MCF 10A (cell line): ENCODE measurements at regions of chr17 and their contacts with region 1.

Region 1: GRCh38 chr17:81601525-81602120 is 35.3 kb downstream of the NPLOC4 start:
- DNase-seq: peak; percentile 72
- H3K4me3 Mint-ChIP-seq: no peak overlapping the region
- H3K27ac Mint-ChIP-seq: no peak overlapping the region
- H3K4me1 Mint-ChIP-seq: no peaks in the 10 kb centered on the region
- H3K27me3 Mint-ChIP-seq: no peaks in the 10 kb centered on the region
- CTCF ChIP-seq: peak; percentile 80

Region 2: GRCh38 chr17:81478119-81478518 is 123.5 kb before region 1 on chr17:
- CTCF ChIA-PET with region 1: no interaction called
- POLR2A ChIA-PET with region 1: no interaction called
- intact Hi-C with region 1: no loop called
- DNase-seq: no peak
- H3K4me3 Mint-ChIP-seq: no peak overlapping the region
- H3K27ac Mint-ChIP-seq: no peak overlapping the region
- H3K4me1 Mint-ChIP-seq: peaks cover 4% of the 10 kb centered on the region
- H3K27me3 Mint-ChIP-seq: no peaks in the 10 kb centered on the region
- CTCF ChIP-seq: no peak

Region 3: GRCh38 chr17:81512560-81513371 is 88.9 kb before region 1 on chr17 and contains the start of gene ACTG1:
- CTCF ChIA-PET with region 1: interaction called, 12 read pairs
- POLR2A ChIA-PET with region 1: no interaction called
- intact Hi-C with region 1: loop called (anchors 2 kb)
- DNase-seq: peak; percentile 92
- H3K4me3 Mint-ChIP-seq: peak within 1 kb of the TSS; percentile 92
- H3K27ac Mint-ChIP-seq: peak within 1 kb of the TSS; percentile 91
- H3K4me1 Mint-ChIP-seq: peaks cover 25% of the 10 kb centered on the region
- H3K27me3 Mint-ChIP-seq: no peaks in the 10 kb centered on the region
- CTCF ChIP-seq: no peak
- total RNA-seq, gene ACTG1: 1,056 and 1,461 TPM in 2 replicates

Region 4: GRCh38 chr17:81519284-81519955 is 82.2 kb before region 1 on chr17:
- CTCF ChIA-PET with region 1: interaction called, 12 read pairs
- POLR2A ChIA-PET with region 1: interaction called, 4 read pairs
- intact Hi-C with region 1: no loop called
- DNase-seq: peak; percentile 50
- H3K4me3 Mint-ChIP-seq: peak overlapping the region; percentile 49
- H3K27ac Mint-ChIP-seq: peak overlapping the region; percentile 42
- H3K4me1 Mint-ChIP-seq: no peaks in the 10 kb centered on the region
- H3K27me3 Mint-ChIP-seq: no peaks in the 10 kb centered on the region
- CTCF ChIP-seq: peak; percentile 53

Region 5: DNA sequence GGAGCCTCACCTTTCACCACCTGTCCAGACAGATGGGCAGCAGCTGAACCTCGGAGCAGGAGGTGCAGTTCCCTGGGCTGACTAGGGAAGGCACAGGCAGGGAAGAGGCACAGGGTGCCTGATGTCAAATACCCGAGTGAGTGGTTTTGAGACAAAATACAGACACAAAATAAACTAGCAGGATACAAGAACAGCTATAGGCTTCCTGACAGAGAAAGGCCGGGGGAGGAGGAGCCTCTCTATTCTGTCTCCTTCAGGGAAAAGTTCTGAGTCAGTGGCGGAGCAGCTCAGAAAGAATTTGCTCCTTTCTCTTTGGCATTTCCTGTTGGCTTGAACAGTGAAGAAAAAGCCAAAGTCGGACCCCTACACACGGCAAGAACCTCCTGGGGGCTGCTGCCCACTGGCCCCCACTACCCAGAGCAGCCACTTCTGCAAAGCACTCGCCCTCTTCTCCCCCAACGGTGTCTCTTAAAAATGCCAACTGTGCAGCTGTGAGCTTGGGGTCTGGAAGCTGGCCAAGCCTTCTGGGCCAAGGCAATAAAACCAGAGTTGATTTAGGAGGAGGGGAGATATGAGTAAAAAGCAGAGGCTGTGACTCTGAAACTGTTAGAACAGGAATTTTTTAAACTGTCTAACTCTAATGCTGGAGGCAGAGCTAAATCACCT is 35.0 kb before region 1 on chr17:
- CTCF ChIA-PET with region 1: interaction called, 21 read pairs
- POLR2A ChIA-PET with region 1: interaction called, 10 read pairs
- intact Hi-C with region 1: no loop called
- DNase-seq: peak; percentile 88
- H3K4me3 Mint-ChIP-seq: peak overlapping the region; percentile 63
- H3K27ac Mint-ChIP-seq: peak overlapping the region; percentile 71
- H3K4me1 Mint-ChIP-seq: peaks cover 14% of the 10 kb centered on the region
- H3K27me3 Mint-ChIP-seq: no peaks in the 10 kb centered on the region
- CTCF ChIP-seq: no peak

Region 6: DNA sequence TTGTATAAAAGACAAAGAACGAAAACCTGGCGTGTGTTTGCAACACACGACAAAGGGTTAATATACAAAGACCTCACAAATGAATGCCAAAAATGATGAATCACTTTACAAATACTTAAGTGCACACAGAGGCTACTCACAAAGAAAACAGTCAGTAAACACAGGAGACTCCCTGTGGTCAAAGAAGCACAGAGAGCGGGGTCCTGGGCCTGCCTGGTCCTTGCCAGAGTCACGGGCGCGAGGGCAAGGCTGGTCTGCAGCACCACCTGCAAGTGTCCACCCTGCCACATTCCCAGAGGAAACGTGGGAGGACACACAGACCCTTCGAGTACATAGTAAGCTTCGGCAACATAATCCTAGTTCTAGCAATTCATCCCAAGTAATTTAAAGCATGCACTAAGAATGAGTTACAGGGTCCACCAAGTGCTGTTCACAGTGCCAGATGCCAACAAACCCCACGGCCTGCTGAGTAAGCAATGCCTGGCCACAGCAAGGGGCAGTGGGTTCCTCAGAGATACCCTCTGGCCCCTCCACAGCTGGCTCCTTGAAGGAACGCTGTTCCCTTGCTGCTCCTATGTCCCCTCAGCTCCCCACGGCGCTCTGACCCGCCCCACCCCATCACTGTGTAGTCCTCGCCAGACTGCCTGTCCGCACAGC is 24.9 kb before region 1 on chr17:
- CTCF ChIA-PET with region 1: interaction called, 29 read pairs
- POLR2A ChIA-PET with region 1: interaction called, 7 read pairs
- intact Hi-C with region 1: no loop called
- DNase-seq: peak; percentile 79
- H3K4me3 Mint-ChIP-seq: peak overlapping the region; percentile 51
- H3K27ac Mint-ChIP-seq: peak overlapping the region; percentile 71
- H3K4me1 Mint-ChIP-seq: peaks cover 44% of the 10 kb centered on the region
- H3K27me3 Mint-ChIP-seq: no peaks in the 10 kb centered on the region
- CTCF ChIP-seq: no peak

Region 7: DNA sequence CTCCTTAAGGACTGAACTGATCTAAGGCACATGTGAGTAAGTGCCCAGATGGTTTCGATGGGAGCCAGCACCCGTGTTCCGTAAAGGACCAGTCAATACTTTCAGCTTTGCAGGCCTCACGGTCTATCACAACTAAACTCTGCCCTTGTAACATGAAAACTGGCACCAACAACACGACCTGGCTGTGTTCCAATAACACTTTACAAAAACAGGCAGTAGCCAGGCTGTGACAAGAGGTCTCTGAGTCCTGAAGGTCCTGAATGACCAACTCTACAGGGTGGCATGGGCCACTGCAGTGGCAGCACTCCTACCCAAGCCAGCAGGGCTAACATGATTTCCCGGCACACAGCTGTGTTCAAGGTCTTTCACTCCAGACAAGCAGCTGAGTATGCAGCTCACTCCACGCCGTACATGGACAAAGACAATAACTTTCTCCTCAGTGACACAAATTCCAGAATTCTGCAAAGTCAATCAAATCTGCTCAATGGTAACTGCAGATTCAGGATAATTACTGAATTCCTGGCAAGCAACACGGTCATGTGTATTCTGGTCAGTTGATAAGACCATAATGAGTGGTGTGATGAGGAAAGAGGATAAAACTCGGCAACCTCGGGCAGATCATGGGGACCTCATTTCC is 20.0 kb after region 1 on chr17:
- CTCF ChIA-PET with region 1: interaction called, 11 read pairs
- POLR2A ChIA-PET with region 1: interaction called, 3 read pairs
- intact Hi-C with region 1: no loop called
- DNase-seq: no peak
- H3K4me3 Mint-ChIP-seq: no peak overlapping the region
- H3K27ac Mint-ChIP-seq: no peak overlapping the region
- H3K4me1 Mint-ChIP-seq: no peaks in the 10 kb centered on the region
- H3K27me3 Mint-ChIP-seq: no peaks in the 10 kb centered on the region
- CTCF ChIP-seq: no peak